Sigmoid colon (tissue), 7 donors: ENCODE measurements at regions of chr10 and their contacts with region 1.

Region 1: DNA sequence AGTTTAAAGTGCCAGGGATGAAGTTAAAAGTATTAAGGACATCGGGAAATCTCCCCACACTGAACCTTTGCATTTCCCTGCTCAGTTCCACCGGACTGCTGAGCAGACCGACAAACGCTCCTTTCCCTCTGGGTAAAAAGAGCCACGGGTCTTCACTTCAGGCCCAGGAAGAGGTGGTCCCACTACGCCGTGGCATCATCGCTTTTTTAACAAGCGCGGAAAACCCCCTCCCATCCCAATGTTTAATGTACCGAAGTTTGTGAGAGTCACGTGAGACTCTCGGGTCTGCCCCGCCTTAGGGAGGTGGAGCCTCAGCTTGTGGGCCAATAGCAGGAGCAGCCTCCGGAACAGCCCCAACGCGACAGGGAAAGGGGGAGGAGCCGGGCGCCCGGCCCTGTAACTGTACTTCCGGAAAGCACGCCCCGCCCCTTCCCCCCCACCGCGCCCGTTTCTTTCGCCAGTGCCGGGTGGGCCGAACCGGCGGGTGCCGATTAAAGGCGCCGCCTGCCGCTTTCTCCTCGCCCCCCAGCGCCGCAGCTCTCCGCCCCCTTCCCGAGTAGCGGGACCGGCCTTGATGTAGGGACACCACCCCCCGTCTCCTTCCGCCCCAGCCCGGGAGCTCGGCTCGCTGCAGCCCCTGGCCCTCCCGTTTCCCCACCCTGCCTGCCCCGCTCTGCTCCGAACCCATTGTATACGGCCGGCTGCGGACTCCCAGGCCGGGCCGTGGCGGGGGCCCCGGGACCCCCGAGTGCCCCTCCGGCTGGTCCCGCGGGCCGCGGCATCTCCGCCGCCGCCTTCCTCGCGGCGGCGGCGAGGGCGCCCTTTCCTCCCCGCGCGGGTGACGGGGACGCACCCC is 2.2 kb upstream of the TRIM8 start:
- DNase-seq: peak; percentile 100
- H3K4me3 ChIP-seq: peak overlapping the region; percentile 57 to 97 (median 88)
- H3K27ac ChIP-seq: peak overlapping the region; percentile 92 to 100 (median 99)
- H3K4me1 ChIP-seq: peaks cover 0 to 24% (median 17%) of the 10 kb centered on the region in 4 donors
- H3K27me3 ChIP-seq: no peaks in the 10 kb centered on the region
- CTCF ChIP-seq: no peak
- EP300 ChIP-seq: peak in 2 of 4 donors; percentile 16
- POLR2A ChIP-seq: peak; percentile 92 to 93

Region 2: GRCh38 chr10:102114861-102115618 is 527.1 kb before region 1 on chr10:
- intact Hi-C with region 1: no loop called
- DNase-seq: peak; percentile 94
- H3K4me3 ChIP-seq: peak overlapping the region; percentile 59 to 87 (median 74)
- H3K27ac ChIP-seq: peak overlapping the region; percentile 94 to 100 (median 100)
- H3K4me1 ChIP-seq: peaks cover 0 to 73% (median 64%) of the 10 kb centered on the region in 4 donors
- H3K27me3 ChIP-seq: no peaks in the 10 kb centered on the region
- CTCF ChIP-seq: no peak
- EP300 ChIP-seq: no peak
- POLR2A ChIP-seq: peak; percentile 13 to 61

Region 3: DNA sequence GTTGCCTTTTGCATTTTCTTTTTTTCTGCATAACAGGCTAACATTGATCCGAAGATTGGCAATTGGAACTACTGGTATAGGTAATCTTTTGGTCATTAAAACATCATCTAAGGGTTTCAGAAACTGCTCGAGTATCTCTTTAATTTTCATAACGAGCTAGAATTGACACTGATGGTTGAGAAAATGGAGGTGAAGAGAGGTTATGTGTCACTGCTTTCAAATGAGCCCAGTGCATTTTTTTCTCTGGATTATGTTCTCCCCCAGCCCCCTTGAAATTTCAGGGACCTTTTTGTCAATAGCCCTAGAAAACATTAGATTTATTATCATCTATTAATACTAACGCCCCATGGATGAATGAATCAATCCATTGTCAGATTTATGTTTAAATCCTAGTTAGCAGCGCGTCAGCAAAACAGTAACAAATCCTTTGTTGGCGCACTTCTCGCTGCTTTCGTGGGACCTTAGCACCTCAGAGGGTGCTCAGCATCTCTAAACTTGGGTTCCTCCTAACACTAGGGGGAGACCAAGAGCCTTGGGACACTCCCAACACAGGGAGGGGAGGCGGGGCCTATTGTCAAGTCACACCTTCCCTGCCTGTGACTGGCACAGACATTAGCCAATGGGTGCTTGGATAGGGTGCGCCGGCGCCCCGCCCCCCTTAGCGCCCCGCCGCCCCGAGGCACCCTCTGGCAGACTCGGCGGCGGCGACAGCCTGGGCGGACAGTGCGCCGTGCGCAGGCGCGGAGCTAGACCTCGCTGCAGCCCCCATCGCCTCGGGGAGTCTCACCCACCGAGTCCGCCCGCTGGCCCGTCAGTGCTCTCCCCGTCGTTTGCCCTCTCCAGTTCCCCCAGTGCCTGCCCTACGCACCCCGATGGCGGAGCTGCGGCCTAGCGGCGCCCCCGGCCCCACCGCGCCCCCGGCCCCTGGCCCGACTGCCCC is 138.6 kb before region 1 on chr10 and contains the start of gene SUFU:
- intact Hi-C with region 1: loop called (anchors 2 kb)
- DNase-seq: peak; percentile 99
- H3K4me3 ChIP-seq: peak within 1 kb of the TSS; percentile 81 to 97 (median 94)
- H3K27ac ChIP-seq: peak within 1 kb of the TSS; percentile 91 to 98 (median 94)
- H3K4me1 ChIP-seq: peaks cover 0 to 54% (median 47%) of the 10 kb centered on the region in 4 donors
- H3K27me3 ChIP-seq: no peaks in the 10 kb centered on the region
- CTCF ChIP-seq: peak; percentile 76 to 94 (median 84)
- EP300 ChIP-seq: no peak
- POLR2A ChIP-seq: peak in 1 of 2 donors; percentile 12
- total RNA-seq, gene SUFU: 5.0 to 10.5 (median 6.7) TPM

Region 4: DNA sequence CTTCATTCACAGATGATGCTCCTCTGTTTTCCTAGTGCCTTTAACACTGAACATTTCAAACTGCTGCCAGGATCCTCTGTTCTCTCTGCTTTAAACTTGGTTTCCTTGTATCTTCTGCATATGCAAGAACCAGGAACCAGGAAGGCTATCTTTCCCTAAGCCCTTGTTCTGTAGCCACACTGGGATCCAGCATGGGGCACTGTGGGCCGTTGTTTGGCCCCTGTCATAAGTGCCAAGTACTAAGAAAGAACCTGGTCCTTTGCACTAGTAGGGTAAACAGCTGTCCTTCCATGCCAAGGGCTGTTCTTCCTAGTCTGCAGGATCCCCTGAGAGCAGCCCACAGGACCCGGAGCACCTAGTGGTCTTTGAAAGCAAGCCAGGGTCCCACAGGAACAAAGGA is 46.8 kb before region 1 on chr10:
- intact Hi-C with region 1: loop called (anchors 2 kb)
- DNase-seq: peak; percentile 72
- H3K4me3 ChIP-seq: no peak overlapping the region
- H3K27ac ChIP-seq: peak overlapping the region in 3 of 4 donors; percentile 67 to 78 (median 74)
- H3K4me1 ChIP-seq: peaks cover 0 to 45% (median 41%) of the 10 kb centered on the region in 4 donors
- H3K27me3 ChIP-seq: no peaks in the 10 kb centered on the region
- CTCF ChIP-seq: peak in 1 of 4 experiments; percentile 23
- EP300 ChIP-seq: no peak
- POLR2A ChIP-seq: no peak

Region 5: GRCh38 chr10:102713814-102714620 is 71.9 kb after region 1 on chr10 and contains the start of gene ARL3:
- intact Hi-C with region 1: loop called (anchors 2 kb)
- DNase-seq: peak; percentile 99
- H3K4me3 ChIP-seq: peak within 1 kb of the TSS; percentile 86 to 100 (median 94)
- H3K27ac ChIP-seq: peak within 1 kb of the TSS; percentile 88 to 95 (median 90)
- H3K4me1 ChIP-seq: peaks cover 0 to 29% (median 17%) of the 10 kb centered on the region in 4 donors
- H3K27me3 ChIP-seq: no peaks in the 10 kb centered on the region
- CTCF ChIP-seq: peak in 3 of 4 experiments; percentile 56 to 69 (median 69)
- EP300 ChIP-seq: no peak
- POLR2A ChIP-seq: peak; percentile 55 to 66
- total RNA-seq, gene ARL3: 7.3 to 12.0 (median 9.3) TPM